Activated CD4-positive, alpha-beta memory T cell treated with anti-CD3 and anti-CD28 coated beads, Interleukin-2, amount 10 ng/mL, durations not matched to agents 7 days and 5 days (primary cell): ENCODE measurements at regions of chr1 and their contacts with region 1.

Region 1: DNA sequence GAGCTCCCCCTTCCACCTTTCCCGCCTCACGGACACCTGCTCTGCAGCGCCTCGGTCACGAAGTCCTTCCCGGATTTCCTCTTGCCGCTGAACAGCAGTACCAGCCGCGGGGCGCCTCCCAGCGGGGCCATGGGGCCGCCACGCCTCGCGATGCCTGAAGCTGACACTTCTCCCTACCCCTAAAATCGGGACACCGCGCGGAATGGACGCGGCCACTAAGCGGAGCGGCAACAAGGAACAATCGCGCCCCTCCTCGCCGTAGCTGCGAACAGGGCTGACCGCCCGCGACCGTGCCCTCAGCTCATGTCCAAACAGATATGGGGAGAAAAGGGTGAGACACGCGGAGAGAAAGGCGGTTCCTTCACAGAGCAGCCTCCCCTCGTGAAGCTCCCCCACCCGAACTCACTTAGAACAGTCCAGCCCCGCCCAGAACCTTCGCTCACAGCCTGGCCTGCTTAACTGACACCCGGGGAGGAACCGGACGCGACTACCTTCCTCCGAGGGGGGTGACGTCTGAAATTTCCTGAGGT is at the start of gene PMVK:
- DNase-seq: peak; percentile 96
- H3K4me3 Mint-ChIP-seq: peak within 1 kb of the TSS; percentile 88
- H3K27ac Mint-ChIP-seq: peak within 1 kb of the TSS; percentile 94
- H3K4me1 Mint-ChIP-seq: peaks cover 59% of the 10 kb centered on the region
- H3K27me3 Mint-ChIP-seq: no peaks in the 10 kb centered on the region
- total RNA-seq, gene PMVK: 40.7 to 41.8 TPM

Region 2: DNA sequence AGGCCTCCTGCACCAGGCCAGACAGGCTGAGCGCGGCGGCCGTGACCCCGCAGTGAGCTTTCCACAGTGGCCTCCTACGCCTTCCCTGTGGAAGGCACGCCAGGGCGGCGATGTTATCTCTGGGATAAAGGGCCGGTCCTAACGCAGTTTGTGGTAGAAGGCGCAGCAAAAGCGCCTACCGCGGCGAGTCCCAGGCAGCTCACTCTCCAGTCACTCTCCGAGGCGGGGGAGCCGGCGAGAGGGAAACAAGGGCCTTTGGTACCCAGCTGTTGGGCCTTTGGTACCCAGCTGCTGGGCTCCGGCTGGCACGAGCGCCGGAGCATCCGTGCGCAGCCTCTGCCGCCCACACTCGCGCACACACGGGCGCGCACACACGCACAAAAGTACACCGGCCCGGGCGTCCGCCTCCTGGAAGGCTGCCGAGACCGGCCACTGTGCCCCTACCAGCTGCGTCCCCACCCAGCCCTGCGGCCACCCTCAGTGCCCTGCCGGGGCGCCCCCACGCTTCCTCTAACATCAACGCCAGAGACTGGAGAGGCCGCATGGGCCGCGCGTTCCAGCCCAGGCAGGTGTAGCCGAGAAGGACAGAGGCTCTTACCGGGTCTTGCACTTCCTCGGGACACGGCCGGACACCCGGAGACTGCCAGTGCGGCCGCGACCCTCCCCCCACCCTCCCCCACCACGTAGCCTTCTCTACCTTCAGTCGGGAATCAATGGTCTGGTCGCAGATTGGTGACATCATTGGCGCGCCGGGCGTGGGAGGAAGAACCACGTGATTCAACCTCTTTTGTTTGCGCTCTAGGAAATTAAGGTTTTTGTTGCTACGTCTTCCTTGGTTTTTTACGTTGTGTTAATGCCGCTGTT is 309.1 kb before region 1 on chr1:
- CTCF ChIA-PET with region 1: no interaction called
- POLR2A ChIA-PET with region 1: interaction called, 13 read pairs
- DNase-seq: peak; percentile 91
- H3K4me3 Mint-ChIP-seq: peak overlapping the region; percentile 99
- H3K27ac Mint-ChIP-seq: peak overlapping the region; percentile 94
- H3K4me1 Mint-ChIP-seq: peaks cover 40% of the 10 kb centered on the region
- H3K27me3 Mint-ChIP-seq: peaks cover 17% of the 10 kb centered on the region

Region 3: GRCh38 chr1:154955718-154956543 is 19.3 kb after region 1 on chr1 and contains the start of gene PBXIP1:
- CTCF ChIA-PET with region 1: interaction called, 12 read pairs
- POLR2A ChIA-PET with region 1: interaction called, 25 read pairs
- DNase-seq: peak; percentile 88
- H3K4me3 Mint-ChIP-seq: peak within 1 kb of the TSS; percentile 96
- H3K27ac Mint-ChIP-seq: peak within 1 kb of the TSS; percentile 97
- H3K4me1 Mint-ChIP-seq: peaks cover 85% of the 10 kb centered on the region
- H3K27me3 Mint-ChIP-seq: no peaks in the 10 kb centered on the region
- total RNA-seq, gene PBXIP1: 169 TPM

Region 4: DNA sequence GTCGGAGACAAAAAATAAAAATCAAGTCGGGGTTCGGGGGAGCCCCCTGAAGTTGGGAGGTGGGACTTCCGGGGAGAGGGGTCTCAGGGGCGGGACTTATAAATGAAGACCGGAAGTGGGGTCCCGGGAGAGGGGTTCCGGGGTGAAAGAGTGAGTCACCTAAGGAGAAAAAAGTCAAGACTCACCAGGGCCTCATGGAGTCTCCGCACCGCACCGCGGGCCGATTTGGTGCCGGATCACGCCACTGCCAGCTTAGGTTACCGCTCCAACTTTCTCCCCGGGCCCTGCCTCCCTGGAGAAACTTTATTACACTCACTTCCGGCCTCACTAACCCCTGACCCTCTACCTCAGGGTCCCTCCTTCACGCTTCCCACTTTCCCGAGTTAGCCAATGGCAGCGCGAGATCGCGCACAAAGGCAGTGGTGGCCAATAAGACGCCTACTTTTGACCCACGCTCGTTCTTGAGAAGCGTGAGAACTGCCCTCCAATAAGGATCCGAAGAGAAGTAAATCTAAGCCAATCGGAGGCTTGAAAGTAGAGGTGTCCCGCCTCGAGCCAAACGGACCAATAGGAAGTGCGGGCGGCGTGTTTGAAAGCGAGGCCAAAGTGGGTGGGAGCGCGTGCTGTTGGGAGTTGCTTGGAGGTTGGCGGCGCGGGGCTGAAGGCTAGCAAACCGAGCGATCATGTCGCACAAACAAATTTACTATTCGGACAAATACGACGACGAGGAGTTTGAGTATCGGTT is 37.6 kb after region 1 on chr1 and contains the start of gene CKS1B:
- CTCF ChIA-PET with region 1: interaction called, 5 read pairs
- POLR2A ChIA-PET with region 1: interaction called, 24 read pairs
- DNase-seq: peak; percentile 97
- H3K4me3 Mint-ChIP-seq: no peak within 1 kb of the TSS
- H3K27ac Mint-ChIP-seq: no peak within 1 kb of the TSS
- H3K4me1 Mint-ChIP-seq: peaks cover 45% of the 10 kb centered on the region
- H3K27me3 Mint-ChIP-seq: no peaks in the 10 kb centered on the region
- total RNA-seq, gene CKS1B: 151 to 162 TPM

Region 5: DNA sequence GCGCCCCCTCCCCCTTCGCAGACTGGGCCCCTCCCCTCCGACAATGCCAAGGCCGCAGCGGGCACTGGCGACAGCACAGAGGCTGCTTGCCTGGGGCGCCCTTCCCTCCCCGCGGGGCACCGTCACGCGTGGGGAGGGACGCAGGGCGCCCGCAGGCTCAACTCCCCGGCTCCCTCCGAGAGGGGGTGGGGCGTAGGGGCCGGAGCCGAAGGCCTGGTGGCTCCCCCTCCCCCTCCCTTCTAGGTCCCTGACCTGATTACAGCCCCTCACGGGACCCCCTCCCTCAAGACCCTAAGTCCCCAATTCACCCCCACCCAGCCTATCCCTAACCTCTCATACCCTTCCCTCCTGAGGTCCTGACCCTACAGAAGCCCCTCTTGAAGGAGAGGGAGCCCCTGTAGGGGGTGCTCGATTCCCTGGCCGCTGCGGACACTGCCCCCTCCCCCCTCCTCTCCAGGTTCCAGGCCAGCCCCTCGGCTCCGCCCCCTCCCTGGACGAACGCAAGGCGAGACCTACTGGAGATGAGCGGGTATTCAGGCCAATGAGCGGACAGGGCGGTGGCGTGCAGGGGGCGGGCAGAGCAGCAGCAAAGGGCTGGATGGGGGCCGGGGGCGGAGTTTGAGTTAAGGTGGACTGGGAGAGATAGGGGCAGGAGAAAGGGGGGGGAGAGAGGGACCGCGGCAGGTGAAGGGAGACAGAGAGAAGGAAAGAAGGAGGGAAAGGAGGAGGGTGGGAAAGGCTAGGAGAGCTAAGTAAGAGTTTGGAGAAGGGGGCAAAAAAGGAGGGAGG is 65.2 kb after region 1 on chr1:
- CTCF ChIA-PET with region 1: interaction called, 3 read pairs
- POLR2A ChIA-PET with region 1: interaction called, 10 read pairs
- DNase-seq: peak; percentile 99
- H3K4me3 Mint-ChIP-seq: peak overlapping the region; percentile 90
- H3K27ac Mint-ChIP-seq: peak overlapping the region; percentile 91
- H3K4me1 Mint-ChIP-seq: peaks cover 56% of the 10 kb centered on the region
- H3K27me3 Mint-ChIP-seq: no peaks in the 10 kb centered on the region

Region 6: GRCh38 chr1:155479205-155479604 is 542.6 kb after region 1 on chr1:
- CTCF ChIA-PET with region 1: no interaction called
- POLR2A ChIA-PET with region 1: no interaction called
- DNase-seq: no peak
- H3K4me3 Mint-ChIP-seq: no peak overlapping the region
- H3K27ac Mint-ChIP-seq: no peak overlapping the region
- H3K4me1 Mint-ChIP-seq: no peaks in the 10 kb centered on the region
- H3K27me3 Mint-ChIP-seq: no peaks in the 10 kb centered on the region